CD4-positive, alpha-beta T cell (primary cell): ENCODE measurements at regions of chr1 and their contacts with region 1.

Region 1: GRCh38 chr1:154386643-154387352 is 18.3 kb upstream of the IL6R start:
- DNase-seq: peak; percentile 43 to 93 (median 65)
- ATAC-seq: peak; percentile 85
- H3K4me3 ChIP-seq: peak overlapping the region; percentile 27
- H3K4me3 Mint-ChIP-seq: peak overlapping the region; percentile 85
- H3K27ac ChIP-seq: peak overlapping the region; percentile 86 to 88
- H3K27ac Mint-ChIP-seq: peak overlapping the region; percentile 89
- H3K4me1 ChIP-seq: peaks cover 48% of the 10 kb centered on the region
- H3K4me1 Mint-ChIP-seq: peaks cover 45% of the 10 kb centered on the region
- H3K27me3 ChIP-seq: no peaks in the 10 kb centered on the region
- H3K27me3 Mint-ChIP-seq: no peaks in the 10 kb centered on the region
- CTCF ChIP-seq: no peak

Region 2: DNA sequence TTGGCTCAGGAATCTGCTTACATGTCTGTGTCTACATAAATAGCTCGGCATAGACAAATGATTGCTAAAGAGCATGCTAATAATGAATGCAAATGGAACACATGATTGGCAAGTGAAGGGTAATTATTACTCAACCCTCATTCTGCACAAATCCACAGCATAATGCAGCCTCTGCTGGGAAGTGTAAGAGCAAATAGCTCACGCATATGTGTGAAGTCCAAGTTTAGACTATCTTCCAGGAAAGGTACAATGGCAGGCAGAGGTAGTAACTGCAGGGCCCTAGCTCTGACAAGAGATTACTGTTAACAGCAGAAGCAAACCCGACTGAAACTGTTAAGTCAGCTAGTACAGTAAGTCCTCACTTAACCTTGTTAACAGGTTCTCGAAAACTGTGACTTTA is 11.3 kb after region 1 on chr1:
- CTCF ChIA-PET with region 1: interaction called, 5 read pairs
- POLR2A ChIA-PET with region 1: interaction called, 58 read pairs
- intact Hi-C with region 1: no loop called
- DNase-seq: no peak
- ATAC-seq: no peak
- H3K4me3 ChIP-seq: peak overlapping the region; percentile 40
- H3K4me3 Mint-ChIP-seq: no peak overlapping the region
- H3K27ac ChIP-seq: no peak overlapping the region
- H3K27ac Mint-ChIP-seq: peak overlapping the region; percentile 61
- H3K4me1 ChIP-seq: peaks cover 31% of the 10 kb centered on the region
- H3K4me1 Mint-ChIP-seq: peaks cover 43% of the 10 kb centered on the region
- H3K27me3 ChIP-seq: no peaks in the 10 kb centered on the region
- H3K27me3 Mint-ChIP-seq: no peaks in the 10 kb centered on the region
- CTCF ChIP-seq: no peak

Region 3: GRCh38 chr1:154512760-154513159 is 126.0 kb after region 1 on chr1:
- CTCF ChIA-PET with region 1: no interaction called
- POLR2A ChIA-PET with region 1: no interaction called
- intact Hi-C with region 1: no loop called
- DNase-seq: no peak
- ATAC-seq: no peak
- H3K4me3 ChIP-seq: no peak overlapping the region
- H3K4me3 Mint-ChIP-seq: no peak overlapping the region
- H3K27ac ChIP-seq: no peak overlapping the region
- H3K27ac Mint-ChIP-seq: no peak overlapping the region
- H3K4me1 ChIP-seq: no peaks in the 10 kb centered on the region
- H3K4me1 Mint-ChIP-seq: no peaks in the 10 kb centered on the region
- H3K27me3 ChIP-seq: peaks cover 4 to 17% of the 10 kb centered on the region in 2 experiments
- H3K27me3 Mint-ChIP-seq: peaks cover 46% of the 10 kb centered on the region
- CTCF ChIP-seq: no peak

Region 4: GRCh38 chr1:154837672-154838171 is 450.9 kb after region 1 on chr1:
- CTCF ChIA-PET with region 1: no interaction called
- POLR2A ChIA-PET with region 1: no interaction called
- intact Hi-C with region 1: no loop called
- DNase-seq: no peak
- ATAC-seq: no peak
- H3K4me3 ChIP-seq: no peak overlapping the region
- H3K4me3 Mint-ChIP-seq: no peak overlapping the region
- H3K27ac ChIP-seq: no peak overlapping the region
- H3K27ac Mint-ChIP-seq: no peak overlapping the region
- H3K4me1 ChIP-seq: no peaks in the 10 kb centered on the region
- H3K4me1 Mint-ChIP-seq: no peaks in the 10 kb centered on the region
- H3K27me3 ChIP-seq: peaks cover 0 to 3% of the 10 kb centered on the region in 2 experiments
- H3K27me3 Mint-ChIP-seq: no peaks in the 10 kb centered on the region
- CTCF ChIP-seq: no peak